T-cell (primary cell): ENCODE measurements at regions of chr5 and their contacts with region 1.

Region 1: GRCh38 chr5:72816311-72817145 is at the start of gene TNPO1:
- DNase-seq: peak; percentile 63 to 90 (median 77)
- ATAC-seq: peak; percentile 78 to 82 (median 82)
- H3K4me3 ChIP-seq: peak within 1 kb of the TSS; percentile 80 to 90
- H3K4me3 Mint-ChIP-seq: peak within 1 kb of the TSS; percentile 91 to 96 (median 94)
- H3K27ac ChIP-seq: peak within 1 kb of the TSS; percentile 84
- H3K27ac Mint-ChIP-seq: peak within 1 kb of the TSS; percentile 84 to 88
- H3K4me1 ChIP-seq: peaks cover 9% of the 10 kb centered on the region in 2 experiments
- H3K4me1 Mint-ChIP-seq: peaks cover 24 to 26% (median 26%) of the 10 kb centered on the region in 3 donors
- H3K27me3 ChIP-seq: peaks cover 0 to 4% of the 10 kb centered on the region in 2 experiments
- H3K27me3 Mint-ChIP-seq: peaks cover 12 to 14% of the 10 kb centered on the region in 2 donors
- total RNA-seq, gene TNPO1: 66.3 to 79.0 (median 67.8) TPM

Region 2: GRCh38 chr5:72611118-72611730 is 205.3 kb before region 1 on chr5:
- CTCF ChIA-PET with region 1: interaction called, 15 to 42 read pairs
- POLR2A ChIA-PET with region 1: interaction called, 4 read pairs
- DNase-seq: peak in 30 of 35 experiments; percentile 2 to 53 (median 22)
- ATAC-seq: peak; percentile 58 to 77 (median 66)
- H3K4me3 ChIP-seq: no peak overlapping the region
- H3K4me3 Mint-ChIP-seq: no peak overlapping the region
- H3K27ac ChIP-seq: no peak overlapping the region
- H3K27ac Mint-ChIP-seq: no peak overlapping the region
- H3K4me1 ChIP-seq: no peaks in the 10 kb centered on the region
- H3K4me1 Mint-ChIP-seq: peaks cover 0 to 5% (median 0%) of the 10 kb centered on the region in 3 donors
- H3K27me3 ChIP-seq: peaks cover 0 to 7% of the 10 kb centered on the region in 2 experiments
- H3K27me3 Mint-ChIP-seq: peaks cover 3 to 10% of the 10 kb centered on the region in 2 donors

Region 3: GRCh38 chr5:72847989-72848473 is 31.5 kb after region 1 on chr5:
- CTCF ChIA-PET with region 1: interaction called, 5 to 7 read pairs
- POLR2A ChIA-PET with region 1: interaction called, 3 to 11 read pairs
- DNase-seq: peak; percentile 61 to 88 (median 73)
- ATAC-seq: peak; percentile 84 to 87 (median 86)
- H3K4me3 ChIP-seq: peak overlapping the region; percentile 88 to 94
- H3K4me3 Mint-ChIP-seq: peak overlapping the region; percentile 97 to 98 (median 98)
- H3K27ac ChIP-seq: peak overlapping the region; percentile 72
- H3K27ac Mint-ChIP-seq: peak overlapping the region; percentile 92 to 97
- H3K4me1 ChIP-seq: peaks cover 6 to 17% of the 10 kb centered on the region in 2 experiments
- H3K4me1 Mint-ChIP-seq: peaks cover 57 to 75% (median 64%) of the 10 kb centered on the region in 3 donors
- H3K27me3 ChIP-seq: no peaks in the 10 kb centered on the region
- H3K27me3 Mint-ChIP-seq: no peaks in the 10 kb centered on the region

Region 4: GRCh38 chr5:73515223-73515622 is 698.7 kb after region 1 on chr5:
- CTCF ChIA-PET with region 1: no interaction called
- POLR2A ChIA-PET with region 1: no interaction called
- DNase-seq: no peak
- ATAC-seq: no peak
- H3K4me3 ChIP-seq: no peak overlapping the region
- H3K4me3 Mint-ChIP-seq: no peak overlapping the region
- H3K27ac ChIP-seq: no peak overlapping the region
- H3K27ac Mint-ChIP-seq: no peak overlapping the region
- H3K4me1 ChIP-seq: peaks cover 0 to 9% of the 10 kb centered on the region in 2 experiments
- H3K4me1 Mint-ChIP-seq: peaks cover 7 to 9% (median 7%) of the 10 kb centered on the region in 3 donors
- H3K27me3 ChIP-seq: no peaks in the 10 kb centered on the region
- H3K27me3 Mint-ChIP-seq: no peaks in the 10 kb centered on the region